Activated CD4-positive, alpha-beta T cell treated with anti-CD3 and anti-CD28 coated beads for 36 hours (primary cell): ENCODE measurements at regions of chr4 and their contacts with region 1.

Region 1: DNA sequence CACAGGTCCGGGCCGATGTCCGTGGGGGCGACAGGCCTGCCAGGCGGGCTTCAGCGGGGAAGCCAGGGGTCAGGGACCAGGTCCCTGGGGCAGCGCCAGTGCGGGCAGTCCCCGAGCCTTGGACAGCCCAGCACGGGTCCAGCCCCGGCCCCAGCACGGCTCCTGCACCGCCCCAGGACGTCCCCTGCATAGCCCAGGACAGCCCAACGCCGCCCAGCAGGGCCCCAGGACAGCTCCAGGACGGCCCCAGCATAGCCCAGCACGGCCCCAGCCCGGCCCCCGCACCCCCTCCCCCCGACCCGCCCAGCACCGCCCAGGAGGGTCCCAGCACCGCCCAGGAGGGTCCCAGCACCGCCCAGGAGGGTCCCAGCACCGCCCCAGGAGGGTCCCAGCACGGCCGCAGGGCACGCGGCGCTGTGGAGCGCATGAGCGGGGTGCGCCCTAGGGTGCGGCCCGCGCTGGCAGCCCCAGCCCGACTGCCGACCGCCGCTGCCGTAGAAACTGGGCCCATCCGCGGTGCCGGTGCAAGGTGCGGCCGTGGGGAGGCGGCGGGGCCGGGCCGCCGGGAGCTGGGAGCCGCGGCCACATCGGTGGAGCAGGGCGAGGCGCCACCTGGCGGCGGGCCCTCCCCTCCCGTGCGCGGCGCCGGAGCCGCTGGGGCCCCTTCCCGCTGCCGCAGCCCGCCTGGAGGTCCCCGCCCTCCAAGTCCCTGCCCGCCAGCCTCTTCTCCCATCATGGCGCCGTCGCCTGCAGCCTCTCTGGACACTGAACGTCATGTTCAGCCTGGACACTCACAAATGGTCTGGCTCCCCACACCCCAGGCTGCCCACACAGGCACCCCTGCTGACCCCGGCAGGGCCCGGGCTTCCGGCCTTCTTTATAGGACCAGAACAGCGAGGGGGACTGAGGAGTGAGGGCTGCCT is 106.8 kb upstream of the NKX1-1 start:
- DNase-seq: peak; percentile 75
- ATAC-seq: peak; percentile 68
- H3K4me3 Mint-ChIP-seq: no peak overlapping the region
- H3K27ac Mint-ChIP-seq: no peak overlapping the region
- H3K4me1 Mint-ChIP-seq: no peaks in the 10 kb centered on the region
- H3K27me3 Mint-ChIP-seq: peaks cover 7% of the 10 kb centered on the region

Region 2: DNA sequence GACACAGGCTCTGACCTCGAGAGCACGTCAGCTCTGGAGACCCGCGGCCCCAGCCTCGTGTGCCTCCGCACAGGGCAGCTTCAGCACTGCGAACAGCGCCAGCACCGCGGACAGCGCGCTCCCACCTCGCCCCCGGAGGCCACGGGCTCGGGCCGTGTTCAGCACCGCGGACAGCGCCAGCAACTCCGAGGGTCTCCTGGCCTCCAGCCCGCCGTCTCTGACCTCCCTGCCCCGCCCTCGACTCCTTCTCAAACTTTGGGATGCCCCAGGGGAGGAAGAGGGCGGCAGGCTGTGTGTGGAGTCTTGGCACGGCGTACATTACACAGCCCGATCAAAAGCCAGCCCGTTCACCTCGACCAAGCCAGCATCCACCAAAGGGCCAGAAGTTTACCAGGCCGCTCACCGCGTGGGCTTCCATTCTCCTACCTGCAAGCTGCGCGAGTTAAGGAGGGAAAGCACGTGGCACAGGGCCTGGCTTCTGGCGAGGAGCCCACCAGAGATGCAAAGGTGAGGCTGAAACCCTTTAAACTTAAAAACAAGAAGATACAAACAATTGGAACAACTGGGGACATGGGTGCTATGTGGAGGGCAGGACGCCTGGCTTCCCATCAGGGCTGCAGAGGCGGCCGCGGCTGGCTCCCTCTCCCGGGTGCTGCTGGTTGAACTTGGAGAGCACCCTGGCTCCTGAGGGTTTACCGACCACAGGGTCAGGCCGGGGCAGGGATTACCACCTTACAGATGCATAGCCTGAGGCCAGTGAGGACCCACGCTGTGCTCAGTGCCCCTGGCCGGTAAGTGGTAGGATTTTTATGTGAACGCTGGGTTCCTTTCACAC is 102.3 kb before region 1 on chr4:
- CTCF ChIA-PET with region 1: no interaction called
- POLR2A ChIA-PET with region 1: no interaction called
- intact Hi-C with region 1: loop called in 1 of 2 experiments (anchors 1 kb)
- DNase-seq: peak; percentile 76
- ATAC-seq: peak; percentile 68
- H3K4me3 Mint-ChIP-seq: no peak overlapping the region
- H3K27ac Mint-ChIP-seq: no peak overlapping the region
- H3K4me1 Mint-ChIP-seq: peaks cover 5% of the 10 kb centered on the region
- H3K27me3 Mint-ChIP-seq: peaks cover 57% of the 10 kb centered on the region

Region 3: GRCh38 chr4:1544861-1545281 is 31.9 kb after region 1 on chr4:
- CTCF ChIA-PET with region 1: no interaction called
- POLR2A ChIA-PET with region 1: no interaction called
- intact Hi-C with region 1: no loop called
- DNase-seq: no peak
- ATAC-seq: no peak
- H3K4me3 Mint-ChIP-seq: no peak overlapping the region
- H3K27ac Mint-ChIP-seq: no peak overlapping the region
- H3K4me1 Mint-ChIP-seq: peaks cover 9% of the 10 kb centered on the region
- H3K27me3 Mint-ChIP-seq: no peaks in the 10 kb centered on the region

Region 4: GRCh38 chr4:2085496-2085908 is 572.5 kb after region 1 on chr4:
- CTCF ChIA-PET with region 1: no interaction called
- POLR2A ChIA-PET with region 1: no interaction called
- intact Hi-C with region 1: no loop called
- DNase-seq: no peak
- ATAC-seq: no peak
- H3K4me3 Mint-ChIP-seq: no peak overlapping the region
- H3K27ac Mint-ChIP-seq: no peak overlapping the region
- H3K4me1 Mint-ChIP-seq: no peaks in the 10 kb centered on the region
- H3K27me3 Mint-ChIP-seq: peaks cover 2% of the 10 kb centered on the region